A549 (cell line): ENCODE measurements at regions of chr7 and their contacts with region 1.

Region 1: DNA sequence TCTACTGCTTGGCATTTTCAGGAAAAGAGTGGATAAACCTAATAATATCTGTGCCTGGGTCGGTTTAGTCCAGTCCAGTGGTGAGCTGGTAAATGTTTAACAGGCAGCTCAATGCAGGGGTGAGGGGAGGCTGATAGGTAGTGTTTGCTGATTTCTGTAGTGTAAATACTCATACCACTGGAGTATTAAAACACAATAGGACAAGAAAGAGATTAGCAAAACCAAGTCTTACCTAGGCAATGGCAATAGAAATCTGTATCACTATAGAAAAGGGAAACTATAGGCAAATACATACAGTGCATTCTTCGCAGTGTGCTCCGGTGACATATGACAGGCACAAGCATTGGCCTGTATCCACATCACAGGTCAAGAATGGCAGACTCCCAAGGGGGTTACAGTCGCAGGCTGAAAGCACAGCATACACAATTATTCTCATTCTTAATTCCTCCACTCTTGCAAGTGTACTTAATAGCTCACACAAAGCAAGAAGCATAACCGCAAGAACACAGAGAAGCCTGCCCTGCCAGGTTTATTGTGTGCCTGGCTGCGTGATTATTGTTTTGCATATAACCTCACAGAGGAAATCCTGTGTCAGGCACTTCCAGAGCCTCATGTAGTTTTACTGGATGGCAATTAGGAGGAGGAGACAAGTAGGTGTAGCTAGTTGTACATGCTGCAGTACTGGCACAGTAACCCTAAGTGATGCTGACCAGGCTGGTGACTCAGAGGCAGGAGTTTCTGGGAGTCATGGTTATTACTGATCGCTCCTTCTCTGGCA is 35.0 kb downstream of the LAMB4 start:
- DNase-seq: peak; percentile 50 to 79
- ATAC-seq: peak; percentile 92 to 97
- H3K4me3 ChIP-seq: peak overlapping the region; percentile 16; the same call in 2 of the 3 replicates
- H3K27ac ChIP-seq: peak overlapping the region; percentile 79 to 85
- H3K4me1 ChIP-seq: peaks cover 45% of the 10 kb centered on the region
- CTCF ChIP-seq: no peak
- EP300 ChIP-seq: no peak
- POLR2A ChIP-seq: no peak
- RAD21 ChIP-seq: 0 out of 5 replicates have a peak, but pooled peaks of 1 of the 2 experiments have one; percentile 12

Region 2: GRCh38 chr7:108002726-108003598 is 92.2 kb before region 1 on chr7 and contains the start of gene LAMB1:
- CTCF ChIA-PET with region 1: interaction called, 33 read pairs
- POLR2A ChIA-PET with region 1: interaction called, 6 read pairs
- DNase-seq: peak; percentile 75 to 78
- ATAC-seq: peak; percentile 64 to 77
- H3K4me3 ChIP-seq: peak within 1 kb of the TSS; percentile 60
- H3K27ac ChIP-seq: peak within 1 kb of the TSS; percentile 86 to 94
- H3K4me1 ChIP-seq: peaks cover 67% of the 10 kb centered on the region
- CTCF ChIP-seq: no peak
- EP300 ChIP-seq: peak in 1 of 2 experiments; percentile 59; a peak in 2 of 5 replicates
- POLR2A ChIP-seq: peak; percentile 69
- RAD21 ChIP-seq: peak in 1 of 2 experiments; percentile 28; a peak in 2 of 5 replicates
- polyA plus RNA-seq, gene LAMB1: 162 and 208 TPM in 2 replicates

Region 3: GRCh38 chr7:108083980-108084379 is 11.1 kb before region 1 on chr7:
- CTCF ChIA-PET with region 1: interaction called, 14 read pairs
- POLR2A ChIA-PET with region 1: interaction called, 10 read pairs
- DNase-seq: no peak
- ATAC-seq: no peak; a peak in 2 of 6 replicates
- H3K4me3 ChIP-seq: no peak overlapping the region
- H3K27ac ChIP-seq: peak overlapping the region in 1 of 2 experiments; percentile 18; a peak in 3 of 6 replicates
- H3K4me1 ChIP-seq: peaks cover 20% of the 10 kb centered on the region
- CTCF ChIP-seq: no peak
- EP300 ChIP-seq: no peak
- POLR2A ChIP-seq: no peak
- RAD21 ChIP-seq: no peak